ENCODE measurements at regions of chr5 and their contacts with region 1.

Region 1: GRCh38 chr5:801472-801871 is 16.9 kb upstream of the ZDHHC11B start:
- DNase-seq: no peak
- H3K4me3 ChIP-seq: no peak overlapping the region
- H3K4me3 Mint-ChIP-seq: no peak overlapping the region
- H3K27ac ChIP-seq: no peak overlapping the region
- H3K27ac Mint-ChIP-seq: no peak overlapping the region
- H3K4me1 ChIP-seq: no peaks in the 10 kb centered on the region
- H3K4me1 Mint-ChIP-seq: no peaks in the 10 kb centered on the region
- H3K27me3 ChIP-seq: no peaks in the 10 kb centered on the region
- H3K27me3 Mint-ChIP-seq: peaks cover 10 to 16% (median 14%) of the 10 kb centered on the region in 3 donors
- CTCF ChIP-seq: no peak

Region 2: DNA sequence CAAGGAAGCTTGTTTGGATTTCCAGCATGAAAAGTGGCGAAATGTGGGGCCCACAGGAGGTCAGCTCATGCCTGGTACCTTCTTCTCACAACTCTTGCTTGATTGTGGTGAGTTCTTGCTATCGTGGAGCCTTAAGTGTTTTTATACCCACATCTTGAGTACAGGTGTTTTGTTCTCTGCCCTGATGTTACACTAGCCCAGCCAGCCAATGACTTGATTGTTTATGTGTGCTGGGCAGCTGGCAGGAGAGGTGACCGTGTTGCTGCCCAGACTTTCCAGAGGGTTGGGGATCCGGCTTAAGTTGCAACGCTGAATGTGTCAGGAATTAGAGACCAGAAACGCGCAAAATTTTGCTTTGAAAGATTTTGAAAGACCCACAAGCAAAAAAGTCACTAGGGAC is 84.3 kb before region 1 on chr5:
- intact Hi-C with region 1: loop called in 1 of 2 experiments (anchors 10 kb)
- DNase-seq: no peak
- H3K4me3 ChIP-seq: no peak overlapping the region
- H3K4me3 Mint-ChIP-seq: no peak overlapping the region
- H3K27ac ChIP-seq: no peak overlapping the region
- H3K27ac Mint-ChIP-seq: no peak overlapping the region
- H3K4me1 ChIP-seq: no peaks in the 10 kb centered on the region
- H3K4me1 Mint-ChIP-seq: no peaks in the 10 kb centered on the region
- H3K27me3 ChIP-seq: no peaks in the 10 kb centered on the region
- H3K27me3 Mint-ChIP-seq: peaks cover 15 to 28% (median 23%) of the 10 kb centered on the region in 3 donors
- CTCF ChIP-seq: no peak

Region 3: GRCh38 chr5:746258-746761 is 55.2 kb before region 1 on chr5:
- intact Hi-C with region 1: no loop called
- DNase-seq: no peak
- H3K4me3 ChIP-seq: no peak overlapping the region
- H3K4me3 Mint-ChIP-seq: no peak overlapping the region
- H3K27ac ChIP-seq: no peak overlapping the region
- H3K27ac Mint-ChIP-seq: no peak overlapping the region
- H3K4me1 ChIP-seq: no peaks in the 10 kb centered on the region
- H3K4me1 Mint-ChIP-seq: no peaks in the 10 kb centered on the region
- H3K27me3 ChIP-seq: no peaks in the 10 kb centered on the region
- H3K27me3 Mint-ChIP-seq: peaks cover 0 to 6% (median 4%) of the 10 kb centered on the region in 3 donors
- CTCF ChIP-seq: no peak

Region 4: GRCh38 chr5:821504-821903 is 20.0 kb after region 1 on chr5:
- intact Hi-C with region 1: no loop called
- DNase-seq: no peak
- H3K4me3 ChIP-seq: no peak overlapping the region
- H3K4me3 Mint-ChIP-seq: no peak overlapping the region
- H3K27ac ChIP-seq: no peak overlapping the region
- H3K27ac Mint-ChIP-seq: no peak overlapping the region
- H3K4me1 ChIP-seq: no peaks in the 10 kb centered on the region
- H3K4me1 Mint-ChIP-seq: no peaks in the 10 kb centered on the region
- H3K27me3 ChIP-seq: no peaks in the 10 kb centered on the region
- H3K27me3 Mint-ChIP-seq: peaks cover 0 to 10% (median 2%) of the 10 kb centered on the region in 3 donors
- CTCF ChIP-seq: no peak

Region 5: DNA sequence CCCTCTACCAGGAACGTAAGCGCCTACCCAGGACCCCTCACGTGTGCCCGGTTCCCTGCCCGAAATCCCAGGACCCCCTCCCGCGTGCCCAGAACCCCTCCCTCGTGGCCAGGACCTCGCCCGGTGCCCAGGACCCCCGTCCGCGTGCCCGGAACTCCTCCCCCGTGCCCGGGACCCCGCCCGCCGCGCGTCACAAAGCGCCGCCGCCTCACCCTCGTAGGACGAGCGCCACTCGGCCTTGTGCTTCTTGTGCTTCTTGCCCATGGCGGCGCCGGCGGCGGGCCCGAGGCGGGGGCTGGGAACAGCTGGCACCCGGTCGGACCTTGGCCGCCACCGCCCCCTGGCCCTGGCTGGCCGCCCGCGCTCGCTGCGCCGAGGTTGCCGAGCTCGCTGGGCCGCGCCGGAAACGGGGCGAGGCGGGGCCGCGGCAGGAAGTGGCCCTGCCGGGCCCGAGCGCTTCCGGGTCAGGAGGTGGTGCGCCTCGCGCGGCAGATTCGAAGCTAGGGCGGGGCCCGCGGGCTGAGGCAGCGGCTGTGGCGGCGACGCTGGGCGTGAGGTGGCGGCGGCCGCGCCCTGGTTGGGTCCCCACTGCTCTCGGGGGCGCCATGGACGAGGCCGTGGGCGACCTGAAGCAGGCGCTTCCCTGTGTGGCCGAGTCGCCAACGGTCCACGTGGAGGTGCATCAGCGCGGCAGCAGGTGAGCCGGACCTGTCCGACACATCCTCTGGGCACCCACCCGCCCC is 91.1 kb after region 1 on chr5 and contains the starts of genes BRD9 and TRIP13:
- intact Hi-C with region 1: no loop called
- DNase-seq: peak; percentile 73 to 79 (median 76)
- H3K4me3 ChIP-seq: peak within 1 kb of the TSS; percentile 73 to 88 (median 76)
- H3K4me3 Mint-ChIP-seq: peak within 1 kb of the TSS; percentile 89 to 93
- H3K27ac ChIP-seq: peak within 1 kb of the TSS; percentile 10 to 90
- H3K27ac Mint-ChIP-seq: peak within 1 kb of the TSS; percentile 87 to 96 (median 90)
- H3K4me1 ChIP-seq: peaks cover 22 to 28% of the 10 kb centered on the region in 2 donors
- H3K4me1 Mint-ChIP-seq: peaks cover 19% of the 10 kb centered on the region
- H3K27me3 ChIP-seq: no peaks in the 10 kb centered on the region
- H3K27me3 Mint-ChIP-seq: peaks cover 0 to 2% (median 0%) of the 10 kb centered on the region in 3 donors
- CTCF ChIP-seq: no peak
- polyA plus RNA-seq, gene BRD9: 5.3 to 22.7 (median 9.3) TPM
- polyA plus RNA-seq, gene TRIP13: 0.24 to 1.2 TPM in 2 of 3 donors, not detected in the other

Region 6: DNA sequence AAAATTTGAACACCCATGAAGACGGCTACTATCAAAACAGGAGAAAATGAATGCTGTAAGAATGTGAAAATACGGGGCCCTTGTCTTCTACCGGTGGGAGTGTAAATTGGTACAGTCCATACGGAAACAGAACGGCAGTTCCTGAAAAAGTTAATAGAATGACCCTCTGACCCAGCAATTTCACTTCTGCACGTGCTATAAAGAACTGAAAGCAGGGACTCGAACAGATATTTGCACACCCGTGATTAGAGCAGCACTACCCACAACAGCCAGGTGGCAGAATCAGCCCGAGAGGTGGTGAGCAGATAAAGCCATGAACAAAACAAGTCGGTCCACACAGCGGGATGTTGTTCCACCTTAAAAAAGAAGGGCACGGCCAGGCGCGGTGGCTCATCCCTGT is 333.0 kb after region 1 on chr5:
- intact Hi-C with region 1: no loop called
- DNase-seq: peak; percentile 57 to 80 (median 73)
- H3K4me3 ChIP-seq: peak overlapping the region in 1 of 3 experiments; percentile 23
- H3K4me3 Mint-ChIP-seq: peak overlapping the region; percentile 37 to 64
- H3K27ac ChIP-seq: no peak overlapping the region
- H3K27ac Mint-ChIP-seq: peak overlapping the region in 6 of 7 donors; percentile 13 to 83 (median 57)
- H3K4me1 ChIP-seq: peaks cover 27 to 30% of the 10 kb centered on the region in 2 donors
- H3K4me1 Mint-ChIP-seq: peaks cover 41% of the 10 kb centered on the region
- H3K27me3 ChIP-seq: no peaks in the 10 kb centered on the region
- H3K27me3 Mint-ChIP-seq: peaks cover 0 to 4% (median 4%) of the 10 kb centered on the region in 3 donors
- CTCF ChIP-seq: peak; percentile 33